Mammary epithelial cell (primary cell): ENCODE measurements at regions of chr3 and their contacts with region 1.

Region 1: DNA sequence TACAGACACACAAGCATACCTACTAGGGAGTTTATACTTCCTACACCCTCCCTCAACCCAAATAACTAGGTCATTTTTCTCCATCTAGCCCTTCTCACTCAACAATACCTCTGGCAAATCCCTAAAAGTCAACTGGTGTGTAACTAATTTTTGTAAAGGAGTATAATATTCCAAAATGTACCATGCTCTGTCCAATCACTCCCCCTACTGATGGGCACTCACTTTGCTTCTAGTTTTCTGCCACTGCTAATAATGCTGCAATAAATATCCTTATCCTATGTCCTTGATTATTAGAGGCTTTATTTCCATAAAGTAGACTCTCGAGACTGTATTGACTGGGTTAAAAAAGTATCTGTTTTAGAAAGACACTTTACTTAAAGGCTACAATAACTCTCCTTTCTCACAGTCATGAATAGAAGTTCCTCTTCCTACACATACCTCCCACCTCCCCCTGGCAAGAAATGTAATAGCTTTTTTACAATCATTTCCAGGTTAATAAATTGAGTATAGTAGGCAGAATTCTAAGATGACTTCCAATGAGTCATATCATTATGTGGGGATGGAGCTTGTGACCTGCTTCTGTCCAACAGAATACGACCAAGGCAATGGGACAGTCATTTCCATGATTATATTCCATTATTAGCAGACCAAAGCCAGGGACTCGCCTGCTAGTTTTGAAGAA is 30.0 kb downstream of the SHQ1 start:
- DNase-seq: peak; percentile 12
- H3K4me3 ChIP-seq: no peak overlapping the region
- H3K27ac ChIP-seq: no peak overlapping the region
- H3K4me1 ChIP-seq: peaks cover 12% of the 10 kb centered on the region
- H3K27me3 ChIP-seq: no peaks in the 10 kb centered on the region
- CTCF ChIP-seq: peak; percentile 67 to 72

Region 2: DNA sequence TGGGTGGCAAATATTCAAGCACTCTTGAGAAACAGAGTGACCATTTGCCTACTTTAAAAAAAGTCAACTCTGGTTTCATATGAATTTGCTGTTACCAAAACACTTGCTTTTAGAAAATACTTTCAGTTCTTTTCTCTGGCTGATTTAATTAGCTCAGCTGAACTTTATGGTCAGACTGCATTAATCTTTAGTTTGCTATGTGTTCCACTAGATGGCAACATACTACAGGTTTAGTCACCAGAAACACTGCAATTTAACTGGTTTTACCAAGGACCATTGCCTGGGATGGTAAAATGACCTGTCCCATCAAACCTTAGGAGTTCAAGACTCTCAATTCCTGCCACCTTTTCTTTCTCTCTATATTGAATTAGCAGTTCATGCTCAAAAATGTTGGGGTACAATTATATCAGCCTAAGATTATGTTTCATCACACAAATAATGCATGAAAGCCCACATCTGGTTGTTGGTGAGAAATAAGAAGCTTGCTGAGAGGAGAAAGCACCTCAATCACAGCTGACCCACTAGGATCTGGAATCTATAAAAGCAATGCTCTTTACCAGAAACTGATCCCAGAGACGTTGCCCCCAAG is 1107.2 kb before region 1 on chr3:
- CTCF ChIA-PET with region 1: no interaction called
- dilution Hi-C with region 1: no loop called
- in situ Hi-C with region 1: loop called in 1 of 2 experiments (anchors 25 kb)
- intact Hi-C with region 1: loop called (anchors 1 kb)
- DNase-seq: peak; percentile 33
- H3K4me3 ChIP-seq: no peak overlapping the region
- H3K27ac ChIP-seq: no peak overlapping the region
- H3K4me1 ChIP-seq: peaks cover 6% of the 10 kb centered on the region
- H3K27me3 ChIP-seq: no peaks in the 10 kb centered on the region
- CTCF ChIP-seq: peak; percentile 63 to 64

Region 3: DNA sequence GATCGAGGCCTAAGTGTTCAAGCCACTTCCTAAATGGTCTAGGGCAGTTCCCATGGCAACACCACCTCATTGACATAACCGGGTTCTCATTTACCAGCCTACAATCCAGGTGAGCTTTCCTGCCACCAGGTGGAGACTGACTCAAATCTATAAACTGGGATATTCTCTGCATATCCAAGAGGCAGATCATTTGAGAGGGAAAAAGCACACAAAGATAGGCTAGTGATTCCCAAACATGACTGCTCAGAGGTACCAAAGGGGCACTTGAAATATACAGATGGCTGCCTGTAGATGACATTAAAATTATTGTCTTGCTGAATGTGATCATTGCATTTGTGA is 892.0 kb before region 1 on chr3:
- CTCF ChIA-PET with region 1: no interaction called
- dilution Hi-C with region 1: loop called (anchors 25 kb)
- in situ Hi-C with region 1: loop called (anchors 10 to 25 kb)
- intact Hi-C with region 1: loop called (anchors 1 kb)
- DNase-seq: peak; percentile 69
- H3K4me3 ChIP-seq: no peak overlapping the region
- H3K27ac ChIP-seq: no peak overlapping the region
- H3K4me1 ChIP-seq: peaks cover 7% of the 10 kb centered on the region
- H3K27me3 ChIP-seq: no peaks in the 10 kb centered on the region
- CTCF ChIP-seq: peak; percentile 83 to 86

Region 4: DNA sequence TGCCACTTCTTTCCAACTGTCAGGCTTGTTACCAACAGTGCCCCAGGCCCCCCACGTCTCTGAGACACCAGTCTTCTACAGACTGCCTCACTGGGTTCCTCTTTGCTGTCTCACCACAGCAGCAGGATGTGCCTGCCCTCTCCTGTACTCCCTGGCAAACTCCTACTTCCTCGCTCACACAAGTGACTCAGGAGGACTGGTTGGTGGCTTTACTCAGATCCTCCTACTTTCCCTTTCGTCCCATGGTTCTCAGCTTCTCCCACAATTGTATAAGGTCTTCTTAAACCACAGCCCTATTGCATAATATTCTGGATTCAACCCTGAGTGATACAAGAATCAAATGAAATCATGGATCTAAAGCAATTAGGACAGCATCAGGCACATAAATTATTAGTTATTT is 786.7 kb before region 1 on chr3:
- CTCF ChIA-PET with region 1: no interaction called
- dilution Hi-C with region 1: no loop called
- in situ Hi-C with region 1: no loop called
- intact Hi-C with region 1: loop called (anchors 5 kb)
- DNase-seq: peak; percentile 79
- H3K4me3 ChIP-seq: no peak overlapping the region
- H3K27ac ChIP-seq: peak overlapping the region; percentile 5
- H3K4me1 ChIP-seq: peaks cover 26% of the 10 kb centered on the region
- H3K27me3 ChIP-seq: no peaks in the 10 kb centered on the region
- CTCF ChIP-seq: peak; percentile 24 to 40

Region 5: DNA sequence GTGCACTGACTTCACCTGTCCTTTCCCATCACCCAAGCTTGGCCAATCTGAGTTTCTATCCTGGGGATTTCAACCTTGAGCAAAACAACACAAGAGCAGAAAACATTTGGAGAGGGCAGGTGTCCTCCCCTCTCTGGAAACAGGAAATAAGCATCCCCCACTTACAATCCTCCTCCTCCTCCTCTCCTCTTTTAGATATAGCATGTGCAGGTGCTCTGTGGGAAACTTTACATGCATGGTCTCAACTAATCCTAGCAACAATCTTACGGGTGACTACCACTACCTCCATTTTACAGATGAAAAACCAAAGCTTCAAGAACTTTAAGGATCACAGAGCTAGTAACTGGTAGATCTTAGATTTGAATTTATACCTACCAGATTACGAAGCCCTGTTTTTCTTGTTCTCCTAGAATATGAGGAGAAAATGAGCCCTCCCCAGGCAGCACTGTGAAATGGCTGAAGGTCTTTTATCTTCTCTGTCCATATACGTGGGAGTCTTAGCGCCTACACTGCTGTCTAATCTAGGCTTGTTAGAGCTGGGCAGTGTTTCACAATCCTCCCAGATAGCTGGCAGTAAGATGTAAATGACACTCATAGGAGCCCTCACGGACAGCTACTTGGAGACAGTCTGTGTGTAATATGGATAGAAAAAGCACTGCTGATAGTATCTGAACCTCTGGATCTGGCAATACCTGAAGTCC is 732.0 kb before region 1 on chr3:
- CTCF ChIA-PET with region 1: no interaction called
- dilution Hi-C with region 1: no loop called
- in situ Hi-C with region 1: no loop called
- intact Hi-C with region 1: no loop called
- DNase-seq: no peak
- H3K4me3 ChIP-seq: no peak overlapping the region
- H3K27ac ChIP-seq: no peak overlapping the region
- H3K4me1 ChIP-seq: no peaks in the 10 kb centered on the region
- H3K27me3 ChIP-seq: no peaks in the 10 kb centered on the region
- CTCF ChIP-seq: no peak

Region 6: DNA sequence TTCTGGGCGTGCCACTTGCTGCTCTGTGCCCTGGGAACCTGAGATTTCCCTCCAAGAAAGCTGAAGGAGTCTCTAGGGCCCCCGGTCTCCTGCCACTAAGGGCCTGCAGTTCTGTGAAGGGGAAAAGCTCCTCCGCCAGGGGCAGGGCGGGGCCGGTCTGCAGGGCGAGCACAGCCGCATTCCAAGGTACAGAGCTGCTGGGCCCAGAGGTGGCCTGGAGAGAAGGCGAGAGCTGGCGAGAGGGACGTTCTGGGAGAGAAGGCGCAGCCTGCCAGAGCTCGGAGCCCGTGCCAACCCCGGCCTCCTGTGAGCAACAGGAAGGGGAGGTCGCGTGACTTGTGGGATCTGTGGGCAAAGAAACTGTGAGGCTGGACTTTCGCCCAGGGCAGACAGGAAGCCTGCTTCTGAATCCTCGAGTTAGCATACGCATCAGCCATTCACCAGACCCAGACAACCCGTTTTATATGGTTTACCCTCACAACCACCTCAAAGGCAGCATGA is 470.4 kb before region 1 on chr3:
- CTCF ChIA-PET with region 1: no interaction called
- dilution Hi-C with region 1: no loop called
- in situ Hi-C with region 1: no loop called
- intact Hi-C with region 1: loop called (anchors 10 kb)
- DNase-seq: peak; percentile 94
- H3K4me3 ChIP-seq: no peak overlapping the region
- H3K27ac ChIP-seq: no peak overlapping the region
- H3K4me1 ChIP-seq: peaks cover 55% of the 10 kb centered on the region
- H3K27me3 ChIP-seq: peaks cover 3% of the 10 kb centered on the region
- CTCF ChIP-seq: peak; percentile 2 to 38

Region 7: GRCh38 chr3:72665701-72666443 is 152.4 kb before region 1 on chr3:
- CTCF ChIA-PET with region 1: no interaction called
- dilution Hi-C with region 1: no loop called
- in situ Hi-C with region 1: loop called in 1 of 2 experiments (anchors 25 kb)
- intact Hi-C with region 1: loop called (anchors 1 kb)
- DNase-seq: peak; percentile 21
- H3K4me3 ChIP-seq: no peak overlapping the region
- H3K27ac ChIP-seq: no peak overlapping the region
- H3K4me1 ChIP-seq: peaks cover 6% of the 10 kb centered on the region
- H3K27me3 ChIP-seq: no peaks in the 10 kb centered on the region
- CTCF ChIP-seq: peak; percentile 61 to 65